Right cardiac atrium (tissue), 5 donors: ENCODE measurements at regions of chr5 and their contacts with region 1.

Region 1: GRCh38 chr5:126354012-126354857 is 69.0 kb upstream of the GRAMD2B start:
- DNase-seq: no peak
- ATAC-seq: peak; percentile 79 to 82
- H3K4me3 ChIP-seq: peak overlapping the region; percentile 36
- H3K27ac ChIP-seq: no peak overlapping the region
- H3K4me1 ChIP-seq: no peaks in the 10 kb centered on the region
- H3K27me3 ChIP-seq: no peaks in the 10 kb centered on the region

Region 2: DNA sequence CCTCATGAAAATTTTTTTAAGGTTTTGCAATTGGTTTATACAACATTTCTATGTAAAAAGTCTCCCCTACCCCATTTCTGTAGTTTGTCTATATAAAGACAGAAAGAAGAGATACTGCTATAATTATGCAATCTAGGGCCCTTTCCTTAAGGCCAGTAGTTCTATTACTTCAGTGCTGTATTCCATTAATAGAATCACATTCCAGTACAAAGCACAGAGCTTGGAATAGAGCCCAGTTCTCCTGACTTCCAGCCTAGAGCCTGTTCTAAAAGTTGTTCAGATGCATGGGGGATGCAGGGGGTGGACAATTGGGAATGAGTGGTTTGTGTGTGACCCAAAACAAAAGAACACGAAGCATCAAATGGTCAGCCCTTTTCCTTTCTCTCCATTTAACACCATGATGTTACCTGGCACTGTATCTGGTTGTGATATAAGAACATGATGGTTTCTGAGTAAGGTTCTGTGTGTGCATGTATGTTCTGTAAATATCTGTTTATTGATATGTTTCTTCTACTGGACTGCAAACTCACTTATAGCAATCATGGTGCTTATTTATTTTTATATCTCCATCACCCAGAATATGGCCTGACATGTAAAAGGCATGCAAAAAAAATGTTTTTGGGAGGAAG is 60.8 kb after region 1 on chr5:
- intact Hi-C with region 1: loop called in 2 of 4 experiments (anchors 10 kb)
- DNase-seq: peak in 2 of 3 donors; percentile 14 to 46
- ATAC-seq: peak; percentile 95 to 96
- H3K4me3 ChIP-seq: no peak overlapping the region
- H3K27ac ChIP-seq: peak overlapping the region; percentile 51
- H3K4me1 ChIP-seq: peaks cover 7% of the 10 kb centered on the region
- H3K27me3 ChIP-seq: no peaks in the 10 kb centered on the region

Region 3: GRCh38 chr5:126422989-126423788 is 69.0 kb after region 1 on chr5 and contains the start of gene GRAMD2B:
- intact Hi-C with region 1: loop called in 2 of 4 experiments (anchors 10 kb)
- DNase-seq: peak; percentile 89 to 95 (median 94)
- ATAC-seq: peak; percentile 99
- H3K4me3 ChIP-seq: peak within 1 kb of the TSS; percentile 45
- H3K27ac ChIP-seq: peak within 1 kb of the TSS; percentile 92
- H3K4me1 ChIP-seq: no peaks in the 10 kb centered on the region
- H3K27me3 ChIP-seq: no peaks in the 10 kb centered on the region
- total RNA-seq, gene GRAMD2B: 31.6 to 45.4 (median 35.2) TPM

Region 4: GRCh38 chr5:126536874-126537273 is 182.6 kb after region 1 on chr5:
- intact Hi-C with region 1: loop called (anchors 2 to 5 kb)
- DNase-seq: no peak
- ATAC-seq: no peak
- H3K4me3 ChIP-seq: no peak overlapping the region
- H3K27ac ChIP-seq: no peak overlapping the region
- H3K4me1 ChIP-seq: peaks cover 2% of the 10 kb centered on the region
- H3K27me3 ChIP-seq: no peaks in the 10 kb centered on the region

Region 5: GRCh38 chr5:126594676-126595485 is 240.6 kb after region 1 on chr5 and contains the start of gene ALDH7A1:
- intact Hi-C with region 1: loop called in 2 of 4 experiments (anchors 5 to 10 kb)
- DNase-seq: peak; percentile 93 to 97 (median 97)
- ATAC-seq: peak; percentile 99
- H3K4me3 ChIP-seq: peak within 1 kb of the TSS; percentile 98
- H3K27ac ChIP-seq: peak within 1 kb of the TSS; percentile 98
- H3K4me1 ChIP-seq: no peaks in the 10 kb centered on the region
- H3K27me3 ChIP-seq: no peaks in the 10 kb centered on the region
- total RNA-seq, gene ALDH7A1: 26.1 to 50.3 (median 32.7) TPM